ENCODE measurements at regions of chr12 and their contacts with region 1.

Region 1: DNA sequence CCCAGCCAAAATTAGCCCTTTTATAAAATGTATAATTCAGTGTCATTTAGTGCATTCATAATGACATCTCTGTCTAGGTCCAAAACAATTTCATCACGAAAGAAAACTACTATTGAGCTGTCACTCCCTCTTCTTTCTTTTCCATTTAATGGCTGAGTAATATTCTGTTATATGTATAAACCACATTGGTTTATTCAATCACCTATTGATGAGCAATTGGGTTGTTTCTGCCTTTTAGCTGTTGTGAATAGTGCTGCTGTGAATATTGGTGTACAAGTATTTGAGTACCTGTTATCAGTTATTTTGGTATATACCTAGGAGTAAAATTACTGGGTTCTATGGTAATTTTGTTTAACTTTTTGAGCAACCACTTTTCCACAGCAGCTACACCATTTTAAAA is 7.2 kb downstream of the DNM1L start:
- DNase-seq: no peak
- ATAC-seq: no peak
- H3K4me3 ChIP-seq: no peak overlapping the region
- H3K27ac ChIP-seq: no peak overlapping the region
- H3K4me1 ChIP-seq: peaks cover 10% of the 10 kb centered on the region
- H3K27me3 ChIP-seq: no peaks in the 10 kb centered on the region
- CTCF ChIP-seq: no peak
- EP300 ChIP-seq: no peak
- POLR2A ChIP-seq: no peak
- RAD21 ChIP-seq: no peak

Region 2: GRCh38 chr12:32302218-32303173 is 383.8 kb before region 1 on chr12:
- CTCF ChIA-PET with region 1: no interaction called
- POLR2A ChIA-PET with region 1: no interaction called
- in situ Hi-C with region 1: no loop called
- intact Hi-C with region 1: no loop called
- DNase-seq: peak; percentile 53
- ATAC-seq: peak; percentile 98
- H3K4me3 ChIP-seq: no peak overlapping the region
- H3K27ac ChIP-seq: no peak overlapping the region
- H3K4me1 ChIP-seq: no peaks in the 10 kb centered on the region
- H3K27me3 ChIP-seq: no peaks in the 10 kb centered on the region
- CTCF ChIP-seq: peak; percentile 76
- EP300 ChIP-seq: no peak
- POLR2A ChIP-seq: no peak
- RAD21 ChIP-seq: peak; percentile 66

Region 3: DNA sequence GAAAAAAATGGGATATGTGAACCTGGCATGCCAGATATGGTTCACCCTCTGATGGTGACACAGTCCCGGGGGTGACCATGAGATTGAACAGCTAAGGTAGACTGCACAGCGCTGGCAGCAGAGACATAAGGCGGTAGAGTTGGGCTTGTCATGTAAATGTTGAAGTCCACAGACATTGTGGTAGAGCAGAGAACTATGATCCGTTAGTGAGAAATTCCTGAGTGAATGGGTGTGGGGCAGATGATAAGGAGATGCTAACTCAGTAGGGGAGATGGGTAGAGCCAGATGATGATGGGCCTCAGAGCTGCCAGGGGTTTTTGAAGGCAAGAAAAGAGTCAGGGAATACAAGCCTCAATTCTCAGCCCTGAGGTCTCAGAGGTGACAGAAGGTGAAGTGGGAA is 58.4 kb before region 1 on chr12:
- CTCF ChIA-PET with region 1: no interaction called
- POLR2A ChIA-PET with region 1: no interaction called
- in situ Hi-C with region 1: no loop called
- intact Hi-C with region 1: no loop called
- DNase-seq: no peak
- ATAC-seq: no peak
- H3K4me3 ChIP-seq: no peak overlapping the region
- H3K27ac ChIP-seq: no peak overlapping the region
- H3K4me1 ChIP-seq: no peaks in the 10 kb centered on the region
- H3K27me3 ChIP-seq: no peaks in the 10 kb centered on the region
- CTCF ChIP-seq: no peak
- EP300 ChIP-seq: no peak
- POLR2A ChIP-seq: no peak
- RAD21 ChIP-seq: no peak

Region 4: GRCh38 chr12:32641287-32641901 is 44.9 kb before region 1 on chr12:
- CTCF ChIA-PET with region 1: no interaction called
- POLR2A ChIA-PET with region 1: no interaction called
- in situ Hi-C with region 1: no loop called
- intact Hi-C with region 1: loop called (anchors 2 kb)
- DNase-seq: no peak
- ATAC-seq: no peak
- H3K4me3 ChIP-seq: no peak overlapping the region
- H3K27ac ChIP-seq: no peak overlapping the region
- H3K4me1 ChIP-seq: no peaks in the 10 kb centered on the region
- H3K27me3 ChIP-seq: no peaks in the 10 kb centered on the region
- CTCF ChIP-seq: no peak
- EP300 ChIP-seq: no peak
- POLR2A ChIP-seq: no peak
- RAD21 ChIP-seq: no peak